A549 (cell line): ENCODE measurements at regions of chr15 and their contacts with region 1.

Region 1: DNA sequence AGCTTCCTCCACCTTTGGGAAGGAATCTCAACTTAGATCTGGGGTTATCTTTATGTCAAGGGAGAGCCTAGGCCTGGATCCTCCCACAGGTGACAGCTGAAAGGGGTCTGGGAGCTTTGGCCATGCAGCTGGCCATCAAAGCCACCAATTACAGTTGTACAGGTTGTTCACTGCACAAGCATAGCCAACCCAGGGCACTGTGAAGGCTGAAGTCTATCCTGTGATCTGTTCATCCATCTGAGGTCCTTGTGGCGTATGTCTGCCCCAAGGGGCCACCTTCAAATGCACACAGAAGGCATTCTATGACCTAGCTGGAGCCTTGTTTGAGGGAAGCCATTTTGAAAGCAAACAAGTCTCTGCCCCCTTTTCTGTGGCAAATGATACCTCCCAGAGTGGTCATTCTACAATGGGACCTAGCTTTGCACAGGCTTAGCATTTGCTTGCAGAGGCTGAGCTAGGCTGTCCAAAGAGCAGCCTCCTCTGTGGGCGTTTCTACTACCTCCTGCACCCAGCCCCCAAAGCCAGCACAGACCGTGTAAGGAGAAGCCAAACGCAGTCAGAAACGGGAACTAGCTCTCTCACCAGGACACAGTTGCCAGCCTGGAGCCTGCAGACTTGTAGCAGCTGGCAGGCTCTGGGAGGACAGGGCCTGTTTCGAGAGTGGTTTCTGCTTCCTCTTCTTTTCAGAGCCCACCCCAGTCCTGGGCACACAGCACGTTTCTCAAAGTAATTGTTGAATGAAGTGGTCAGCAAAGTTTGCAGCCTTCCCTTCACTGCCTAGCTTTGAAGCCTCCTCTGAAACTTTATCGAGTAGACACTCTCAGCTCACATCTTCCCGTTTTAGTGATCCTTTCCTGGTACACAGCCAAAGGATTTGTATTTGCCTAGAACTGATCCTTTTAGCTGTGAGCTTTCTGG is 157.3 kb upstream of the SMAD3 start:
- DNase-seq: no peak
- ATAC-seq: peak; percentile 7 to 15; a peak in 2 of 6 replicates
- H3K4me3 ChIP-seq: no peak overlapping the region
- H3K27ac ChIP-seq: peak overlapping the region in 1 of 2 experiments; percentile 38; a peak in 2 of 6 replicates
- H3K4me1 ChIP-seq: peaks cover 12% of the 10 kb centered on the region; the same call in 2 of the 3 replicates
- CTCF ChIP-seq: no peak
- EP300 ChIP-seq: no peak
- POLR2A ChIP-seq: no peak
- RAD21 ChIP-seq: no peak

Region 2: GRCh38 chr15:66862878-66863335 is 45.2 kb before region 1 on chr15:
- CTCF ChIA-PET with region 1: interaction called, 91 read pairs
- POLR2A ChIA-PET with region 1: no interaction called
- DNase-seq: peak; percentile 87 to 90
- ATAC-seq: peak; percentile 85 to 97
- H3K4me3 ChIP-seq: no peak overlapping the region
- H3K27ac ChIP-seq: peak overlapping the region; percentile 1 to 66; a peak in 4 of 6 replicates
- H3K4me1 ChIP-seq: peaks cover 17% of the 10 kb centered on the region
- CTCF ChIP-seq: peak; percentile 98
- EP300 ChIP-seq: no peak
- POLR2A ChIP-seq: no peak
- RAD21 ChIP-seq: peak; percentile 83 to 87

Region 3: GRCh38 chr15:66894986-66895780 is 12.9 kb before region 1 on chr15:
- CTCF ChIA-PET with region 1: interaction called, 261 read pairs
- POLR2A ChIA-PET with region 1: no interaction called
- DNase-seq: no peak
- ATAC-seq: no peak
- H3K4me3 ChIP-seq: no peak overlapping the region
- H3K27ac ChIP-seq: peak overlapping the region in 1 of 2 experiments; percentile 43; a peak in 4 of 6 replicates
- H3K4me1 ChIP-seq: peaks cover 46% of the 10 kb centered on the region
- CTCF ChIP-seq: no peak
- EP300 ChIP-seq: no peak
- POLR2A ChIP-seq: no peak
- RAD21 ChIP-seq: no peak

Region 4: DNA sequence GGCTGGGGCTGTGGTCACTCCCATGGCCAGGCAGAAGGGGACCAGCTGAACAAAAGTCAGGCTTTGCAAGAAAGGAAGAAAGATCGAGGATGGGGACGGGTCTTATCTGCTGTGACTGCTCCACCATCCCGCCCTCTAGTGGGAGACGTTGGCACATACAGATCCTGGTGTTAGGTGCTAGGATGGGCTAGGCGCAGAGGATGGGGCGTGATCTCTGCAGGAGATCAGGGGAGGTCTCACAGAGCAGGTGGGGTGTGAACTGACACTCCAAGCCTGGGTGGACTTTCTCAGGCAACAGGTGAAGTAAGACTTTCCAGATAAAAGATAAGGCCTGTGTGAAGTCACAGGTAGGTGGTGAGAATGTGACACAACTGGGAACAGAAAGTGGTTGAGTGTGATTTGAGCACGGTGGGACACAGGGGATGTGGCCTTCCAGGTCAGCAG is 15.4 kb after region 1 on chr15:
- CTCF ChIA-PET with region 1: interaction called, 261 read pairs
- POLR2A ChIA-PET with region 1: no interaction called
- DNase-seq: peak; percentile 58 to 64
- ATAC-seq: peak; percentile 64 to 87; a peak in 3 of 6 replicates
- H3K4me3 ChIP-seq: no peak overlapping the region
- H3K27ac ChIP-seq: peak overlapping the region in 1 of 2 experiments; percentile 31; a peak in 2 of 6 replicates
- H3K4me1 ChIP-seq: peaks cover 16% of the 10 kb centered on the region
- CTCF ChIP-seq: peak; percentile 45; the same call in 2 of the 3 replicates
- EP300 ChIP-seq: no peak
- POLR2A ChIP-seq: no peak
- RAD21 ChIP-seq: peak; percentile 28 to 58; a peak in 4 of 5 replicates

Region 5: DNA sequence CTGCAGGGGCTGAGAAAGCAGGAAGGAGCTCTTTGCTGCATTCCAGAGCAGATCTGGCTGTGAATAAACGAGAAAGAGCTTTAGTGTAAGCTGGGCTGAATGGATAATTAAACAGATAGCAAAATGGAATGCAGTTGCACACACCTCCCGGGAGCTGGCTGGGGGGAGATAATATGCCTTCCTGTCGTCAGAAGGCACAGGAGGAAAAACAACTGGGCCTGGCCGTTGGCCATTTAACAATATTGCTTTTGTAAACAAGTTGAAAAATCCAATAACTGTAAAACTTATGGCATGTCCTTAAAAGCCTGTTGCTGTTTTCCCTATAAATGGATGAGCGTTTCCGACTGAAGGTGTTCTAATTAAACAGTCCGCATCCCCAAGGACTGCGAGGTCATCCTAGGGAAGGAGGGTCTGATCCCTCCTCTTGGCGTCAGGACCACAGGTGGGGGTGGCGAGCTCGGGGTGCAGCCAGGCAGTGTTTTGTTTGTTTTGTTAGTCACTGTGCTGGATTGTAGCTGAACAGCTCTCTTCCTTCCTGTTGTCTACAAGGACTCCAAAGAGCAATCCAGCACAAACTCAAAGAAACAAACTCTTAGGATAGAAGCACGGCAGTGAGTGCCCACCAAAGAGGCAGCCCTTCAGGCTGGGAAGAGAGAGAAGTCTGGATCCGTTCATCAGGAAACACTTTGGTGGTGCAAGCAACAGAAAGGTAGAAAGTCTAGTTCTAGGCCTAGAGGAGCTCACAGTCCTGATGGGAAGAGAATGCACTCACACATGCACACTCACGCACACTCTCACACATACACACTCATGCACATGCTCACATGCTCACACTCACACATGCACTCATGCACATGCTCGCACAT is 23.9 kb after region 1 on chr15:
- CTCF ChIA-PET with region 1: interaction called, 261 read pairs
- POLR2A ChIA-PET with region 1: no interaction called
- DNase-seq: peak; percentile 96 to 97
- ATAC-seq: peak; percentile 97
- H3K4me3 ChIP-seq: peak overlapping the region; percentile 2; the same call in 1 of the 3 replicates
- H3K27ac ChIP-seq: peak overlapping the region; percentile 91 to 93
- H3K4me1 ChIP-seq: peaks cover 46% of the 10 kb centered on the region
- CTCF ChIP-seq: no peak
- EP300 ChIP-seq: peak; percentile 76 to 88; a peak in 4 of 5 replicates
- POLR2A ChIP-seq: no peak
- RAD21 ChIP-seq: peak in 1 of 2 experiments; percentile 44; a peak in 4 of 5 replicates